Activated CD4-positive, alpha-beta T cell treated with anti-CD3 and anti-CD28 coated beads for 36 hours (primary cell): ENCODE measurements at regions of chr3 and their contacts with region 1.

Region 1: GRCh38 chr3:72996473-72997333 is at the start of gene PPP4R2:
- DNase-seq: peak; percentile 94
- ATAC-seq: peak; percentile 88
- H3K4me3 Mint-ChIP-seq: peak within 1 kb of the TSS; percentile 85
- H3K27ac Mint-ChIP-seq: peak within 1 kb of the TSS; percentile 93
- H3K4me1 Mint-ChIP-seq: peaks cover 35% of the 10 kb centered on the region
- H3K27me3 Mint-ChIP-seq: no peaks in the 10 kb centered on the region
- total RNA-seq, gene PPP4R2: 75.1 to 91.5 TPM

Region 2: DNA sequence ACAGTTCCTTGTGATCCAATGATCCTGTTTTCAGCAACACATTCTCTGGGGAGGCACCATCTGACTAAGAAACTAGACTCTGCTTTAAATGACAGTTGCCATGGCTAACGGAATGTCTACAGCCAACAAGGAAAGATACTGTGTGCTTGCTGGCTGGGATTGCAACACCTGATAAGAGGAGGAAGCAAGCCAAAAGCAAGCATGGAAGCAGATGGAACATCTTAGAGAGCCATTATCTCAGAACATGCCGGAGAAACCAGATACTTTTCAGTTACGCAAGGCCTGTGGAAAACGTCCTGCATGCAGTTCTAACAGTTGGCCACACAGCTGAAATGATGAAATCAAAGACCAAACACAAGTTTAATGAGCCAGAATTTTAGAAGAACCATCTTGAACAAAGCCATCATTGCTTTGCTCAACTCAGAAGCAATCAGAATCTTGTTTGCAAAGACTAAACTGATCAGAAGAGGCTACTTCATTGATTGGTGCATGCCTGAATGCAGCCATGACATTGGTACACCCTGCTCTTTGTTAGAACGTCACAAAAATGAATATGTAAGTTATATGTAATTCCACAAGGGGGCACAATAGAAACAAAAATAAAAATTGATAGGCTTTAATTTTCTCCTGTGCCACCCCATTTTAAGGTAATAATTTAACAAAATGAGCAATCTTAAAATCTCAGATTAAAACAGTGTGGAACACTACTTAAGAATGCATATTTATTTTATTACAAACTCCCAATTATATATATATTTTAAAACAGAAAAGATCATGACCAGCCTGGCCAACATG is 58.0 kb before region 1 on chr3:
- CTCF ChIA-PET with region 1: interaction called, 8 read pairs
- POLR2A ChIA-PET with region 1: no interaction called
- intact Hi-C with region 1: loop called (anchors 1 to 2 kb)
- DNase-seq: peak; percentile 44
- ATAC-seq: peak; percentile 98
- H3K4me3 Mint-ChIP-seq: no peak overlapping the region
- H3K27ac Mint-ChIP-seq: no peak overlapping the region
- H3K4me1 Mint-ChIP-seq: no peaks in the 10 kb centered on the region
- H3K27me3 Mint-ChIP-seq: no peaks in the 10 kb centered on the region

Region 3: DNA sequence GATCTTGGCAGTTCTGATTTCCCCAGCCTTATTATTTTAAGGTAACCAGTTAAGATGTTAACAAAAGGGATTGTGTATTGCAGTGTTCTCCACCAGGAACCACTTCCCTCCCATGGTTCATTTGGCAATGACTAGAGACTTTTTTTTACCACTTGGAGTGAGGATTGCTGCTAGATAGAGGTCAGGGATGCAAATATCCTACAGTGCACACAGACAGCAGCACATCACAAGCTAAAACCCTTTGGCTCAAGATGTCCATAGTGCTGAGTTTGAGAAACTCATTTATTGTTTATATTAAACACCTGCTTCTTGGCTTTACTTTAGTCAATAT is 40.6 kb after region 1 on chr3:
- CTCF ChIA-PET with region 1: no interaction called
- POLR2A ChIA-PET with region 1: interaction called, 3 read pairs
- intact Hi-C with region 1: loop called in 1 of 2 experiments (anchors 5 kb)
- DNase-seq: no peak
- ATAC-seq: no peak
- H3K4me3 Mint-ChIP-seq: no peak overlapping the region
- H3K27ac Mint-ChIP-seq: peak overlapping the region; percentile 58
- H3K4me1 Mint-ChIP-seq: peaks cover 92% of the 10 kb centered on the region
- H3K27me3 Mint-ChIP-seq: no peaks in the 10 kb centered on the region